ENCODE measurements at regions of chr4 and their contacts with region 1.

Region 1: DNA sequence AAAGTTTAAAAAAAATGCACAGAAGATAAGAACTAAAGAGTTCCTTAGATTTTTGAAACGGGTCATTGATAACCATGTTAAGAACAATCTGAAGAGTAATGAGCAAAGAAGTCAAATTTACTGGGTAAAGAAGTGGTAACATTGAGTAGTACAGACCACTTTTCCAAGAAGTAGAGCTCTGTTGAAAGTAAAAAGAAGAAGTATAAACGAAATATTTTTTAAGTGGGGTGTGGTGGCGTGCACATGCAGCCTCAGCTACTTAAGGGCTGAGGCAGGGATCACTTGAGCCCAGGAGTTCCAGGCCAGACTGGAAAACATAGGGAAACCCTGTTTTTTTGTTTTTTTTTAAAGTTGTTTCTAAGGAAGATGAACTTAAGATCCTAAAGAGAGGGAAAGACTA is 68.5 kb downstream of the UBA6 start:
- H3K4me3 Mint-ChIP-seq: peak overlapping the region; percentile 20
- H3K27ac Mint-ChIP-seq: peak overlapping the region; percentile 81
- H3K4me1 Mint-ChIP-seq: peaks cover 9% of the 10 kb centered on the region
- H3K27me3 Mint-ChIP-seq: no peaks in the 10 kb centered on the region

Region 2: DNA sequence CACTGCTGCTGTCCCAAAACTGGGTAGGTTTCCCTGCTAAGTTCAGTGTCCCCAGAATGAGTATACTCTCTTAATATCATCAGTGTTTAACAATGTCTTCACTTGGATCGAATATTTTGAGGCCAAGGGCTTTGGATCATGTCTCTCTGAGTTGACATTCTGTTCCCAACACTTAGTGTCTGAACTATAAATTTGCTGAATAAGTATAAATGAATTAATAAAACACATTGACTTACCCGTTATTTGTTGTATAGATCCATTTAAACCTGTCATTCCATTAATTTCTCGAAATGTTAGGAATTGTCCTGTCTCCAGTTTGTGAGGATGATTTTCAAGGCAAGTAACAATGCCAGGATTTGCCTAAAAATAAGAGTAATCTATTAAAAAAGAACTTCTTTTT is 35.8 kb after region 1 on chr4:
- intact Hi-C with region 1: loop called (anchors 5 kb)
- H3K4me3 Mint-ChIP-seq: no peak overlapping the region
- H3K27ac Mint-ChIP-seq: no peak overlapping the region
- H3K4me1 Mint-ChIP-seq: no peaks in the 10 kb centered on the region
- H3K27me3 Mint-ChIP-seq: no peaks in the 10 kb centered on the region

Region 3: GRCh38 chr4:67736262-67736661 is 103.8 kb after region 1 on chr4:
- intact Hi-C with region 1: no loop called
- H3K4me3 Mint-ChIP-seq: no peak overlapping the region
- H3K27ac Mint-ChIP-seq: no peak overlapping the region
- H3K4me1 Mint-ChIP-seq: no peaks in the 10 kb centered on the region
- H3K27me3 Mint-ChIP-seq: no peaks in the 10 kb centered on the region

Measured in dendritic cell treated with granulocyte-macrophage colony-stimulating factor and Interleukin-4, amounts not matched to agents 40 ng/mL and 50 ng/mL, for 4 days (primary cell).